Right ventricle myocardium superior (tissue), 1 donor: ENCODE measurements at regions of chr10 and their contacts with region 1.

Region 1: DNA sequence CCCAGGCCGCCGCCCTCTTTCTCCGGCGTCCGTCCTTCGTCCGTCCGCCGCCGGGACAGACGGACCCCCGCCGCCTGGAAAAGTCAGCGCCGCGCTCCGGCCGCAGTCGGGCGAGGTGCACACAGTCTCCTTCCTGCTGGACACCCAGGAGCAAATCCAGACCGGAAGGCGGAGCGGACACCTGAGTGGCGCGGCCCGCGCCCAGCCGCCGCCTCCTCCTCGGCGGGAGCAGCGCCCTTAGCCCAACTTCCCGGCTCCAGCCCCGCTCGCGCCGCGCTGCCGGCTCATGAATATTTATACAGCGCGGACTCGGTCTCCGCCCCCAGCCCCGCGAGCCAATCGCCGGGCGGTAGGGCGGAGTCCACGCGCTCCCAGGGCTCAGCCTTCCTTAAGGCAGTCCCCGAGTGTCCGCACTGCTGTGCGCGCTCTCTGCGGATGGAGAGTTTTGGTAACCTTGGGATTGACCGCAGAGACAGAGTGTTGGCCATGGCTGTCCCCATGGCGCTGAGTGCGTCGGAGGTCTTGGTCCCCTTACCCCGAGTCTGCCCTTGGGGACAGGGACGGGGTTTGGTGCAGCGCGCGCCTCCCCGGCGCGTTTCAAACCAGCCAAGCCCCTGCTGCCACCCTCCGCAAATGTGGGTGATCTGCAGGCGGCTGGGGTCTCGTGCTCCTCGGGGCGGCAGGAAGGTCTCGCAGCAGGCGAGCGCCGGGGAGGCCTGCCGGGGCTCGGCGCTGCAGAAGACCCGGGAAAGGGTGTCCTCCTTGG is at the start of gene FZD8:
- DNase-seq: peak; percentile 95
- ATAC-seq: peak; percentile 92
- total RNA-seq, gene FZD8: 6.6 TPM

Region 2: GRCh38 chr10:35912615-35913569 is 270.7 kb after region 1 on chr10:
- intact Hi-C with region 1: loop called (anchors 5 kb)
- DNase-seq: no peak
- ATAC-seq: peak; percentile 27